Sciatic nerve (tissue), 2 donors: ENCODE measurements at regions of chr13 and their contacts with region 1.

Region 1: GRCh38 chr13:25762795-25763377 is 288.9 kb downstream of the SHISA2 start:
- DNase-seq: no peak
- ATAC-seq: no peak

Region 2: DNA sequence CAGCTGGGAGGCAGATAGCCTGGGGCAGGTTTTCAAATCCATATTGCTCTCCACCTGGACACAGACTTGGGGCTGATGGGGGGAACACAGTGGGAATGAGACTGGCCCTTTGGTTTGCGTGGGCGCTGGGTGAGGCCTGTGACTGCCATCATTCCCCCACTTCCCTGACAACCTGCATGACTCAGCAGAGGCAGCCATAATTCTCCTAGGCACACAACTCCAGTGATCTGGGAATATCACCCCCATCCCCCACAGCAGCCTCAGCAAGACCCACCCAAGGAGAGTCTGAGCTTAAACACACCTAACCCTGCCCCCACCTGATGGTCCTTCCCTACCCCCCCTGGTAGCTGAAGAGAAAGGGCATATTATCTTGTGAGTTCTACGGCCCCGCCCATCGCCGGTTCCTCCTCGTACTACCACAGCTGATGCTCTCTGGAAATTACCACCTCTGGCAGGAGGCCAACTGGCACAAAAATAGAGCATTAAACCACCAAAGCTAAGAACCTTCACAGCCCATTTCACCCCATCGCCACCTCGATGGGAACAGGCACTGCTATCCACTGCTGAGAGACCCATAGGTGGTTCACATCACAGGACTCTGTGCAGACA is 927.9 kb before region 1 on chr13:
- intact Hi-C with region 1: loop called (anchors 5 kb)
- DNase-seq: no peak
- ATAC-seq: no peak